Aorta (tissue), 5 donors: ENCODE measurements at regions of chr9 and their contacts with region 1.

Region 1: DNA sequence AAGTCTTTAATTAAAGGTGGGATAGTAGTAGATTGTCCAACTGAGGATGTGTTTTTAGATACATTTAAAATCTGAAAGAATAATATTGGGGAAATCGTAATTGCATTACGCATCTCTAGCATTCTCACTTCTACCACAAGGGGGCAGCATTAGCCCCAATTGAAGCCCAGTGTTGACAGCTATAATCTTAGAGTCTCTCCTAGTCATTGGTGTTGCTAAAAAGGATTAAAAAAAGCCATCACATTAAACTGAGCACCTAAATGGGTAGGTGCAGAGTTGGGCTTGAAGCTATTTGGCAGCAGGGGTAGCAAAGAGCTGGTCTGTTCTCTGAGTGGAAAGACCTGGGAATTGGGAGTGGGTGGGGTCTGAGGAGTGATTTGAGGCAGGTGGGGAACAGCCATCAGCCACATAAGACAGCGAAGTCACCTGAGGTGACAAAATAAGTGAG is 177.2 kb downstream of the OSTF1 start:
- DNase-seq: no peak
- ATAC-seq: peak; percentile 87
- H3K4me3 ChIP-seq: no peak overlapping the region
- H3K27ac ChIP-seq: no peak overlapping the region
- H3K4me1 ChIP-seq: peaks cover 3 to 7% of the 10 kb centered on the region in 2 donors
- H3K27me3 ChIP-seq: no peaks in the 10 kb centered on the region

Region 2: GRCh38 chr9:75039009-75039408 is 226.5 kb before region 1 on chr9:
- intact Hi-C with region 1: no loop called
- DNase-seq: no peak
- ATAC-seq: no peak
- H3K4me3 ChIP-seq: no peak overlapping the region
- H3K27ac ChIP-seq: no peak overlapping the region
- H3K4me1 ChIP-seq: no peaks in the 10 kb centered on the region
- H3K27me3 ChIP-seq: no peaks in the 10 kb centered on the region

Region 3: DNA sequence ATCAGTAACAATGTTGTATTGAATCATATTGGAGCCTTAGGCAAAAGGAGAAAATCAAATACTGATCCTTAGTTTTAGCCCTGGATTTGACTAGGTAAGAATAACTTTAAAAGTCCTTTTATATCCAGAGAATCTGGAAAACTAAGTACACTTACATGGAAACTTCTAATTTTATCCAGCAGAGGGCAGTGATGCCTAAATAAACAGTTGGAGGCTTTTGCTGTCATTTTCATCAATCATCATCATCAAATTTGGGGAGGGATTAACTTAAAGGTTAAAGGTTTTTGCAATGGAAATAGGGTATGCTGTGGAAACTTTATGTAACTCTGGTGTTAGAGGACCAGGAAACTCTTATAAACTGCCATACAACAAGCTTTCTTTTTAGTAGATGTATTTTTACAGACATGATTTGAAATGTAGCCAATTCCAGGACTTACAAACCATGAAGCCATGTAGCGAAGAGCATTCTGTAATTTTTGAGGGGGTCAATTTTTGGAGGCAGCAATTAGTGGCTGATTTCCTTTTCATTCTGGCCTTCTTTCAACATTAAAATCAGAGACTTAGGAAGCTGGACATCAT is 64.6 kb before region 1 on chr9:
- intact Hi-C with region 1: no loop called
- DNase-seq: no peak
- ATAC-seq: no peak
- H3K4me3 ChIP-seq: no peak overlapping the region
- H3K27ac ChIP-seq: no peak overlapping the region
- H3K4me1 ChIP-seq: peaks cover 0 to 3% of the 10 kb centered on the region in 2 donors
- H3K27me3 ChIP-seq: no peaks in the 10 kb centered on the region

Region 4: GRCh38 chr9:75451505-75451904 is 186.0 kb after region 1 on chr9:
- intact Hi-C with region 1: loop called in 1 of 2 experiments (anchors 5 kb)
- DNase-seq: no peak
- ATAC-seq: peak; percentile 69
- H3K4me3 ChIP-seq: no peak overlapping the region
- H3K27ac ChIP-seq: no peak overlapping the region
- H3K4me1 ChIP-seq: peaks cover 3 to 5% of the 10 kb centered on the region in 2 donors
- H3K27me3 ChIP-seq: no peaks in the 10 kb centered on the region

Region 5: GRCh38 chr9:75539523-75539922 is 274.0 kb after region 1 on chr9:
- intact Hi-C with region 1: loop called in 1 of 2 experiments (anchors 10 kb)
- DNase-seq: no peak
- ATAC-seq: peak; percentile 78
- H3K4me3 ChIP-seq: no peak overlapping the region
- H3K27ac ChIP-seq: no peak overlapping the region
- H3K4me1 ChIP-seq: no peaks in the 10 kb centered on the region
- H3K27me3 ChIP-seq: no peaks in the 10 kb centered on the region

Region 6: GRCh38 chr9:75723560-75723959 is 458.0 kb after region 1 on chr9:
- intact Hi-C with region 1: loop called in 1 of 2 experiments (anchors 10 kb)
- DNase-seq: no peak
- ATAC-seq: no peak
- H3K4me3 ChIP-seq: no peak overlapping the region
- H3K27ac ChIP-seq: no peak overlapping the region
- H3K4me1 ChIP-seq: peaks cover 2 to 7% of the 10 kb centered on the region in 2 donors
- H3K27me3 ChIP-seq: no peaks in the 10 kb centered on the region

Region 7: DNA sequence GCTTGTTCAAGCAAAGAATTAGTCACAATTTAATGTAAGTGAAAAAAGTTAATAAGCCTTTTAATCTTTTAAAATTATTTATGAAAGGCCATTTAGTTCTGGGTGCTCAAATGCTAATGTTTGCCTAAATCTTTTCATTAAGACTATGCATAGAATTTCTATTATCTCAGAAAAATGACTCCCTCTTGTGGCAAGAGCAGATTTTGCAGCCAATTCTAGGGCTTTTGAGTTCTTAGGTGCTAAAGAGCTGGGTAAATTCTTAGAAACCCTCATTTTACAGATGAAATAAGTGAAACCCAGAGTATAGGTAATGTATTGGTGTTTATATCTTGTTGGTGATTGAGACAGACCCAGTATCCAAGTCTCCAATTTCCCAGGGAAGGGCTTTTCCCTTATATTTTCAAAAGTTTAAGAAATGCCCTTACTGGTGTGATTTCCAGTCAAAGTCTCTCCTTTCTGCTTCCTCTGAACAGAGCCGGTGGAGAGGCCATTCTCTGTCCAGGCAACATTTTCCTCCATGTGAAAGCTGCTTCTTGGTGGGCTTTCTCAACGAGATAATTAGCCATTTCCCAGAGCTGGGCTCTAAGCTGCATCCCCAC is 600.8 kb after region 1 on chr9:
- intact Hi-C with region 1: loop called (anchors 5 kb)
- DNase-seq: no peak
- ATAC-seq: no peak
- H3K4me3 ChIP-seq: no peak overlapping the region
- H3K27ac ChIP-seq: no peak overlapping the region
- H3K4me1 ChIP-seq: no peaks in the 10 kb centered on the region
- H3K27me3 ChIP-seq: no peaks in the 10 kb centered on the region

Region 8: DNA sequence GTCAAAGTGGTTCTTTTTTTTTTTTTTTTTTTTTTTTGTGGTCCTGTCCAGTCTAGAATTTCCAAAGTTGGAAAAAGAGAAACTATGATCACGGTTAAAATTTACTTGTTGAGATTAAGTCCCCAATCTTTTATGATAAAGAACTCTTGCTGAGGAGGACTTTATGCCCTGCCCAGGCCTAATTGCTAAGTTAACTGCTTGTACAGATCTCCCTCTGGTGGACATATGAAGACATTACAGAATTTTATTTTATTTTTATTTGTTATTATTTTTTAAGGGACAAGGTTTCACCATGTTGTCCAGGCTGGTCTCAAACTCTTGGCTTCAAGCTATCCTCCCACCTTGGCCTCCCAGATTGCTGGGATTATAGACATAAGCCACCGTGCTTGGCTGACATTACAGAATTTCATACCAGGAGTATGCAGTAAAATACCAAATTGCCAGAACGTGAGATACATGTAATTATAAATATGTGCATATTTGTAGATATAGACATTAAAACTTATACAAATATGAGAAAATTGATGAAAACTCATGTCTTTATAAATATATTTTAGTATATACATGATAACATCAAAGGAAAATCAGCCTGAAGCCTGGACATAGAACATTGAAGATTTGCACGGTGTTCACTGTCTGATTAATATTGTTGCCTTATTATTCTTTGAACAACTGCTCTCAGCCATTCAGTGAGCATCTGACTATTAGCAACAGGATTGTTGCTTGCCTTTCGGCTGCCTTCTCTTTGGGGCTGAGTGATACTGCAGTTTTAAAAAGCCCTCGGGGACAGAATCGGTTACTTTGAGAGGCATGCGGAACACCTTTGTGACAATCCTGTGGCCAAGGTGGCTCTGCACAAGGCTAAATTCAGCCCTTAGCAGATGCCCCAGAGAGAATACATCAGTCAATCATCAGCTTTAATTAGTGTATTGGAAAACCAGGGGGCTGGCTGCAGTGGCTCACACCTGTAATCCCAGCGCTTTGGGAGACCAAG is 1037.7 kb after region 1 on chr9:
- intact Hi-C with region 1: loop called in 1 of 2 experiments (anchors 5 kb)
- DNase-seq: no peak
- ATAC-seq: peak; percentile 71
- H3K4me3 ChIP-seq: no peak overlapping the region
- H3K27ac ChIP-seq: no peak overlapping the region
- H3K4me1 ChIP-seq: no peaks in the 10 kb centered on the region
- H3K27me3 ChIP-seq: no peaks in the 10 kb centered on the region